Endothelial cell of umbilical vein (primary cell): ENCODE measurements at regions of chr19 and their contacts with region 1.

Region 1: GRCh38 chr19:10625003-10625776 is at the start of gene SLC44A2:
- DNase-seq: peak; percentile 41
- H3K4me3 ChIP-seq: peak within 1 kb of the TSS; percentile 33 to 37 (median 33)
- H3K27ac ChIP-seq: no peak within 1 kb of the TSS
- H3K4me1 ChIP-seq: peaks cover 10% of the 10 kb centered on the region
- H3K27me3 ChIP-seq: no peaks in the 10 kb centered on the region
- CTCF ChIP-seq: no peak
- POLR2A ChIP-seq: peak; percentile 22
- total RNA-seq, gene SLC44A2: 130 and 136 TPM in 2 replicates

Region 2: GRCh38 chr19:9751446-9751845 is 873.7 kb before region 1 on chr19:
- CTCF ChIA-PET with region 1: no interaction called
- POLR2A ChIA-PET with region 1: no interaction called
- dilution Hi-C with region 1: no loop called
- intact Hi-C with region 1: no loop called
- DNase-seq: no peak
- H3K4me3 ChIP-seq: no peak overlapping the region
- H3K27ac ChIP-seq: no peak overlapping the region
- H3K4me1 ChIP-seq: no peaks in the 10 kb centered on the region
- H3K27me3 ChIP-seq: no peaks in the 10 kb centered on the region
- CTCF ChIP-seq: no peak
- POLR2A ChIP-seq: no peak

Region 3: GRCh38 chr19:10602330-10603083 is 22.7 kb before region 1 on chr19:
- CTCF ChIA-PET with region 1: interaction called, 3 read pairs
- POLR2A ChIA-PET with region 1: interaction called, 3 read pairs
- dilution Hi-C with region 1: no loop called
- intact Hi-C with region 1: loop called (anchors 2 kb)
- DNase-seq: peak; percentile 83
- H3K4me3 ChIP-seq: peak overlapping the region; percentile 87 to 93 (median 91)
- H3K27ac ChIP-seq: peak overlapping the region; percentile 74
- H3K4me1 ChIP-seq: peaks cover 25% of the 10 kb centered on the region
- H3K27me3 ChIP-seq: no peaks in the 10 kb centered on the region
- CTCF ChIP-seq: no peak
- POLR2A ChIP-seq: no peak